CD8-positive, alpha-beta T cell (primary cell): ENCODE measurements at regions of chr10 and their contacts with region 1.

Region 1: GRCh38 chr10:89414146-89414878 is at the start of gene IFIT5:
- DNase-seq: peak; percentile 38 to 86 (median 67)
- ATAC-seq: peak; percentile 78
- H3K4me3 ChIP-seq: peak within 1 kb of the TSS; percentile 70 to 87
- H3K4me3 Mint-ChIP-seq: peak within 1 kb of the TSS; percentile 94
- H3K27ac ChIP-seq: peak within 1 kb of the TSS; percentile 83 to 91
- H3K27ac Mint-ChIP-seq: peak within 1 kb of the TSS; percentile 98
- H3K4me1 ChIP-seq: peaks cover 47% of the 10 kb centered on the region
- H3K4me1 Mint-ChIP-seq: peaks cover 50% of the 10 kb centered on the region
- H3K27me3 ChIP-seq: no peaks in the 10 kb centered on the region
- H3K27me3 Mint-ChIP-seq: no peaks in the 10 kb centered on the region
- CTCF ChIP-seq: no peak
- total RNA-seq, gene IFIT5: 15.0 to 16.1 TPM

Region 2: GRCh38 chr10:88582806-88583583 is 831.3 kb before region 1 on chr10 and contains the start of gene RNLS:
- CTCF ChIA-PET with region 1: no interaction called
- POLR2A ChIA-PET with region 1: no interaction called
- intact Hi-C with region 1: loop called in 1 of 2 experiments (anchors 10 kb)
- DNase-seq: peak; percentile 21 to 84 (median 65)
- ATAC-seq: peak; percentile 83
- H3K4me3 ChIP-seq: peak within 1 kb of the TSS; percentile 83
- H3K4me3 Mint-ChIP-seq: peak within 1 kb of the TSS; percentile 91
- H3K27ac ChIP-seq: peak within 1 kb of the TSS; percentile 72 to 83
- H3K27ac Mint-ChIP-seq: peak within 1 kb of the TSS; percentile 92
- H3K4me1 ChIP-seq: peaks cover 7% of the 10 kb centered on the region
- H3K4me1 Mint-ChIP-seq: peaks cover 11% of the 10 kb centered on the region
- H3K27me3 ChIP-seq: no peaks in the 10 kb centered on the region
- H3K27me3 Mint-ChIP-seq: peaks cover 3% of the 10 kb centered on the region
- CTCF ChIP-seq: peak; percentile 61
- total RNA-seq, gene RNLS: 1.6 to 1.7 TPM

Region 3: GRCh38 chr10:89086801-89087521 is 327.4 kb before region 1 on chr10:
- CTCF ChIA-PET with region 1: no interaction called
- POLR2A ChIA-PET with region 1: no interaction called
- intact Hi-C with region 1: loop called in 1 of 2 experiments (anchors 2 kb)
- DNase-seq: peak in 1 of 9 experiments; percentile 9
- ATAC-seq: no peak
- H3K4me3 ChIP-seq: no peak overlapping the region
- H3K4me3 Mint-ChIP-seq: no peak overlapping the region
- H3K27ac ChIP-seq: no peak overlapping the region
- H3K27ac Mint-ChIP-seq: no peak overlapping the region
- H3K4me1 ChIP-seq: peaks cover 12% of the 10 kb centered on the region
- H3K4me1 Mint-ChIP-seq: peaks cover 6% of the 10 kb centered on the region
- H3K27me3 ChIP-seq: no peaks in the 10 kb centered on the region
- H3K27me3 Mint-ChIP-seq: no peaks in the 10 kb centered on the region
- CTCF ChIP-seq: no peak

Region 4: DNA sequence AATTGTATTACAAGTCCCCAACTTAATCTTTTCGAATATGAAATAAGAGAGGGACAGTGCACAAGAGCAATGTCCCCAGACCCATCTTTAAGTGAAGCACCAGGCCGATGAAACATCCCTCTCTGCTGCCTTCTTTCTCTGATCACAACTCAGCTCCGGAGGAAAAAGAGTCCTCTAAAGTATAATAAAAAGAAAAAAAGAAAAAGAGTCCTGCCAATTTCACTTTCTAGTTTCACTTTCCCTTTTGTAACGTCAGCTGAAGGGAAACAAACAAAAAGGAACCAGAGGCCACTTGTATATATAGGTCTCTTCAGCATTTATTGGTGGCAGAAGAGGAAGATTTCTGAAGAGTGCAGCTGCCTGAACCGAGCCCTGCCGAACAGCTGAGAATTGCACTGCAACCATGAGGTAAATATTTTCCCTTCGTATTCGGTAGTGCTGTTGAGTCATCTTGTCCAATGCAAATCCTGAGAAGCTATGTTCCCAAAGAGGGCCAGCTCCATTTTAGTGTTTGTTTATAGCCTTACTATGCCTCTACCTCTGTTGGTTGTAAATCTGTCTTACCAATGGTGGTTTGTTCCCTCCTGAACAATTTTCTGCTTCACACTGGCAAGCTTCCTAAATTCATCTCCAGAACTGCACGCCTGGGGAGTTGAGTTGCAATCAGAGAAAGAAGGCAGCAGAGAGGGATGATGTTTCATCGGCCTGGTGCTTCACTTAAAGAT is 112.4 kb before region 1 on chr10 and contains the start of gene IFIT2:
- CTCF ChIA-PET with region 1: interaction called, 3 read pairs
- POLR2A ChIA-PET with region 1: interaction called, 7 read pairs
- intact Hi-C with region 1: loop called (anchors 2 kb)
- DNase-seq: peak in 6 of 9 experiments; percentile 11 to 83 (median 46)
- ATAC-seq: peak; percentile 76
- H3K4me3 ChIP-seq: peak within 1 kb of the TSS; percentile 51 to 76
- H3K4me3 Mint-ChIP-seq: peak within 1 kb of the TSS; percentile 88
- H3K27ac ChIP-seq: peak within 1 kb of the TSS; percentile 66 to 96
- H3K27ac Mint-ChIP-seq: peak within 1 kb of the TSS; percentile 98
- H3K4me1 ChIP-seq: peaks cover 24% of the 10 kb centered on the region
- H3K4me1 Mint-ChIP-seq: peaks cover 34% of the 10 kb centered on the region
- H3K27me3 ChIP-seq: no peaks in the 10 kb centered on the region
- H3K27me3 Mint-ChIP-seq: no peaks in the 10 kb centered on the region
- CTCF ChIP-seq: no peak
- total RNA-seq, gene IFIT2: 18.4 TPM

Region 5: DNA sequence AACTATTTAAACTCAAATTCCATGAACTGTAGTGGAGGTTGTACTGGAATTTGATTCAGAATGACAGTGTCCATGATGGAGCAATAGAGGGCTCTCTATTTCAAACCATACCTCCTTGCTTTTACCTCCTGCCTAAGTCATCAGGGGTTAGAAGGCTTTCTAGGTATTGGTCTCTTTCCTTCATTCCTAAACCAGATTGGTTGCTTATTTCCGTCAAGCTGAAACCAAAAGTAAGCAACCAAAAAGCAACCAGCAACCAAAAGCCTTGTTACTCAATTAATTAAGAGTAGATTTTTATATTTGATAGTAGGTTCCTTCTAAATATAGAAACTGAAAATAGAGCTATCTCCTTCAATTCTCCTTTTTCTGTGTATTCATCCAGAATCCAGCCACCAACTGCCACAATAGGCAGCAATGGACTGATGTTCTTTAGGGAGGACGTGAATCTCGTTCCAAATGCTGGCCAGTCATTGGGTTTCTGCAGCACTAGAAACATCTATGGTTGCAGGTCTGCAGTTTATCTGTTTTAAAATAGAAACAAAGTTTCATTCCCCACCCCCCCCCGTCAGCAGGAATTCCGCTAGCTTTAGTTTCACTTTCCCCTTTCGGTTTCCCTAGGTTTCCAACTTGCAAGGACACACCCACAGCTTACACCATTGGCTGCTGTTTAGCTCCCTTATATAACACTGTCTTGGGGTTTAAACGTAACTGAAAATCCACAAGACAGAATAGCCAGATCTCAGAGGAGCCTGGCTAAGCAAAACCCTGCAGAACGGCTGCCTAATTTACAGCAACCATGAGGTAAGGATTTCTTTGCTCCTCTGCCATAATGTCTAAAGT is 22.2 kb before region 1 on chr10 and contains the start of gene IFIT1:
- CTCF ChIA-PET with region 1: interaction called, 6 read pairs
- POLR2A ChIA-PET with region 1: interaction called, 15 read pairs
- intact Hi-C with region 1: loop called in 1 of 2 experiments (anchors 1 kb)
- DNase-seq: peak in 8 of 9 experiments; percentile 23 to 92 (median 54)
- ATAC-seq: peak; percentile 93
- H3K4me3 ChIP-seq: peak within 1 kb of the TSS; percentile 68 to 79
- H3K4me3 Mint-ChIP-seq: peak within 1 kb of the TSS; percentile 90
- H3K27ac ChIP-seq: peak within 1 kb of the TSS; percentile 65 to 80
- H3K27ac Mint-ChIP-seq: peak within 1 kb of the TSS; percentile 88
- H3K4me1 ChIP-seq: peaks cover 15% of the 10 kb centered on the region
- H3K4me1 Mint-ChIP-seq: peaks cover 35% of the 10 kb centered on the region
- H3K27me3 ChIP-seq: no peaks in the 10 kb centered on the region
- H3K27me3 Mint-ChIP-seq: no peaks in the 10 kb centered on the region
- CTCF ChIP-seq: no peak
- total RNA-seq, gene IFIT1: 1.9 to 2.5 TPM

Region 6: DNA sequence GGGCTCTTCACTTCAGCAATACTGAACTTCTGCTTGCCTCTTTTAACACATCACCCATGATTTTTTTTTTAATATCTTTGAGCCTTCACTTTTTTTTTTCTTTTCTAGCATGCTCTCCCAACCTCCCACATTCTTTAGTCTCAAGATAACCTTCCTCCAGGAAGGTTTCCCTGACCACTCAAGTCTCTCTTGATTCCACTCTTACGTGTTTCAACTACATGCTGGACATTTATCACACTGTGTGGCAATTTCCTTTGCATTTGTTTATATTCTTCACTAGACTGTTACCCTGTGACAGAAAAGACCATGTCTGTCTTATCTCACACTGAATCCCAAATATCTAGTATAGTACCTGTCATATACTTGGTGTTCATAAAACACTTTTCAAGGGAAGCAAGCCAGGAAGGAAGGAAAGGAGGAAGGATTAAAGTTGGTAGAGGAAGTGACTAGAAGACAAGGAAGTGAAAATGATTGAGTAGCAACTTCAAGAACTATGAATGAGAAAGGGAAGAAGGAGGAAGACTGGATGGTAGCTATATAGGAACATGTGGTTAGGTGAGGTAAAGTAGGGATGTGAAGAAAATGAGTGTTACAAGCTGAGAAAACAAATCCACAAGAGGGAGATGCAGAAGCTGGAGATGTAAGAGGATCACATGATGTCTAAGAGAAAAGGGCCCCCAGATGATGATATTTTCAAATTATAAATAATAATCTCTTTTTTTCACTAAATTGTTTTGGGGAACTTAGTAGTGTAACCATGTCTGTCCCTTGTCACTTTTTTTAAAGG is 40.4 kb after region 1 on chr10:
- CTCF ChIA-PET with region 1: no interaction called
- POLR2A ChIA-PET with region 1: no interaction called
- intact Hi-C with region 1: no loop called
- DNase-seq: no peak
- ATAC-seq: no peak
- H3K4me3 ChIP-seq: no peak overlapping the region
- H3K4me3 Mint-ChIP-seq: no peak overlapping the region
- H3K27ac ChIP-seq: no peak overlapping the region
- H3K27ac Mint-ChIP-seq: no peak overlapping the region
- H3K4me1 ChIP-seq: no peaks in the 10 kb centered on the region
- H3K4me1 Mint-ChIP-seq: no peaks in the 10 kb centered on the region
- H3K27me3 ChIP-seq: no peaks in the 10 kb centered on the region
- H3K27me3 Mint-ChIP-seq: peaks cover 13% of the 10 kb centered on the region
- CTCF ChIP-seq: no peak

Region 7: GRCh38 chr10:89466599-89467035 is 52.3 kb after region 1 on chr10:
- CTCF ChIA-PET with region 1: no interaction called
- POLR2A ChIA-PET with region 1: no interaction called
- intact Hi-C with region 1: no loop called
- DNase-seq: no peak
- ATAC-seq: no peak
- H3K4me3 ChIP-seq: no peak overlapping the region
- H3K4me3 Mint-ChIP-seq: no peak overlapping the region
- H3K27ac ChIP-seq: no peak overlapping the region
- H3K27ac Mint-ChIP-seq: no peak overlapping the region
- H3K4me1 ChIP-seq: no peaks in the 10 kb centered on the region
- H3K4me1 Mint-ChIP-seq: no peaks in the 10 kb centered on the region
- H3K27me3 ChIP-seq: no peaks in the 10 kb centered on the region
- H3K27me3 Mint-ChIP-seq: peaks cover 7% of the 10 kb centered on the region
- CTCF ChIP-seq: no peak

Region 8: DNA sequence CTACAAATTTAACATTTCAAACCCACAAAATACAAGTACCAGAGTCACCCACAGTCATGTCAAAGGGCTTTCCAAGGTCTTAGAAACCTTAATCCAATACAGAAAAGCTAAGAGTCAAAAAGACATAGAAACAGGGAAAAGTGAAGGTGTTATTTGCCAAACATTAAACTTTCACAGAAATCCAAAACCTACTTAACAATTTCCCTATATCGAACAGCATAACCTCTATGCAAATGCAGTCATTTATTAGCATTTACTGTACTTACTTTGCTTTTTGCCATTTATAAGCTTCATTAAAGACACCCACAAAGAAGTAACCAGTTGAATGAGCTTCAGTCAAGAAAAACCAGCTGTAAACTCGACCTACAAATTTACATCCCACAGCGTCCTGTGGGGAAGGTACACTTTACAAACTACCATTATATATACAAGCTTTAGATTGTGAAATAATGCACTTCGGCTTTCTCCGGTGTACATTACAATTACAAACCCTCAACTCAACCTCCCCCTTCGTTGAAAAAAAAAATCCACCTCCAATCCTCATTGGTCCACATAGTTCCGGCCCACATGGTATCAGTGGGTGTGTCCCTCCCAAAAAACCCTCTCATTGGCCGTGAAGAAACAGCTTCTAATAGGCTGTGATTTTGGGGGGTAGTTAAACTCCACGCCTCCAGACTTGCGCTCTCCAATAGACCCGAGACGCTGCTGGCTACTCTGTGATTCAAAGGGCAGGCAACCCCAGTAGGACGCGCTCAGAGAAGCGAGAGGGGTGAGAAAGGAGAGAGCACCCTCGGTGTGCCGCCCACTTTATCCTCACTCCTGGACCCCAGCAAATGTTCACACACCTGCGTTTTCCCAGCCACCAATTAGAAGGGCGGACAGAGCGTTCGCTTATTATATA is 229.4 kb after region 1 on chr10:
- CTCF ChIA-PET with region 1: no interaction called
- POLR2A ChIA-PET with region 1: no interaction called
- intact Hi-C with region 1: loop called (anchors 5 kb)
- DNase-seq: peak in 8 of 9 experiments; percentile 25 to 90 (median 56)
- ATAC-seq: peak; percentile 91
- H3K4me3 ChIP-seq: peak overlapping the region; percentile 45 to 57
- H3K4me3 Mint-ChIP-seq: no peak overlapping the region
- H3K27ac ChIP-seq: no peak overlapping the region
- H3K27ac Mint-ChIP-seq: no peak overlapping the region
- H3K4me1 ChIP-seq: peaks cover 9% of the 10 kb centered on the region
- H3K4me1 Mint-ChIP-seq: peaks cover 8% of the 10 kb centered on the region
- H3K27me3 ChIP-seq: no peaks in the 10 kb centered on the region
- H3K27me3 Mint-ChIP-seq: peaks cover 13% of the 10 kb centered on the region
- CTCF ChIP-seq: no peak

Region 9: GRCh38 chr10:90857635-90858460 is 1443.5 kb after region 1 on chr10 and contains the start of gene HTR7:
- CTCF ChIA-PET with region 1: no interaction called
- POLR2A ChIA-PET with region 1: no interaction called
- intact Hi-C with region 1: loop called in 1 of 2 experiments (anchors 10 kb)
- DNase-seq: peak; percentile 44 to 82 (median 57)
- ATAC-seq: peak; percentile 84
- H3K4me3 ChIP-seq: peak within 1 kb of the TSS; percentile 42 to 54
- H3K4me3 Mint-ChIP-seq: peak within 1 kb of the TSS; percentile 88
- H3K27ac ChIP-seq: no peak within 1 kb of the TSS
- H3K27ac Mint-ChIP-seq: peak within 1 kb of the TSS; percentile 30
- H3K4me1 ChIP-seq: peaks cover 9% of the 10 kb centered on the region
- H3K4me1 Mint-ChIP-seq: peaks cover 8% of the 10 kb centered on the region
- H3K27me3 ChIP-seq: peaks cover 25% of the 10 kb centered on the region in 2 experiments
- H3K27me3 Mint-ChIP-seq: peaks cover 49% of the 10 kb centered on the region
- CTCF ChIP-seq: peak; percentile 69
- total RNA-seq, gene HTR7: not detected